ENCODE measurements at regions of chr13 and their contacts with region 1.

Region 1: GRCh38 chr13:19863323-19864023 is at the start of gene ZMYM5:
- DNase-seq: peak; percentile 98
- ATAC-seq: peak; percentile 86
- H3K4me3 ChIP-seq: peak within 1 kb of the TSS; percentile 80 to 92 (median 81)
- H3K27ac ChIP-seq: peak within 1 kb of the TSS; percentile 89 to 98 (median 92)
- H3K4me1 ChIP-seq: peaks cover 16 to 17% of the 10 kb centered on the region in 2 donors
- H3K27me3 ChIP-seq: no peaks in the 10 kb centered on the region
- CTCF ChIP-seq: no peak
- POLR2A ChIP-seq: peak; percentile 90 to 97
- total RNA-seq, gene ZMYM5: 7.8 to 13.8 (median 10.2) TPM

Region 2: DNA sequence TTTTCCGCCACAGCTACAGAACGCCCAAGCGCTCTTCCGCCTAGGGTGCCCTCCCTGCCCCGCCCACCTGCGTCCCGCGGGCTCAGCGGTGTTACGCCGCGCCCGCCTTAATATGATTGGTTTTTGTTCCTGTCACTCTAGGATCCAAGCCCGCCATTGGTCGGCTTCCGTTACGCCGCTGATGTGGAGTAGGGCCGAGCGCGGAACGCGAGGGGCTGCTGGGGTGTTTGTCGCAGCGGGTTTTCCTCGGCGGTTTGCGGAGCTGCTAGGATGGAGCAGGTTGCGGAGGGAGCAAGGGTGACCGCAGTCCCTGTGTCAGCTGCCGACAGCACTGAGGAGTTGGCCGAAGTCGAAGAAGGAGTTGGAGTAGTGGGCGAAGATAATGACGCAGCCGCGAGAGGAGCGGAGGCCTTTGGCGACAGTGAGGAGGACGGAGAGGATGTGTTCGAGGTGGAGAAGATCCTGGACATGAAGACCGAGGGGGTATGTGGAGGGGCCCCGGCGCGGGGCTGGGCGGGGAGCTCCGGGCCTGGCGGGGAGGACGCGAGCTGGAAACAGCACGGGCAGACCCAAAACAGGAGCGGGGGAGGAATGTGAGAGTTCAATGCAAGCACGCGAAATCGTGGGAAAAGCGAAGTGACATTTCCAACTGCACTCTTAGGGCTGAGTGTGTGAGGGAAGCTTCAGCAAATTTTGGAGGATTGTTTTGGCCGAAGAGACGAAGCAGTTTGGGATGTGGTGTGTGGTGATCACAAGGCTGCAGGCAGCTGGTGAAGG is 229.8 kb before region 1 on chr13 and contains the start of gene MPHOSPH8:
- in situ Hi-C with region 1: loop called in 2 of 4 experiments (anchors 10 kb)
- intact Hi-C with region 1: loop called (anchors 2 kb)
- DNase-seq: peak; percentile 93 to 94
- ATAC-seq: peak; percentile 98 to 99
- H3K4me3 ChIP-seq: peak within 1 kb of the TSS; percentile 63 to 93 (median 88)
- H3K27ac ChIP-seq: peak within 1 kb of the TSS; percentile 87 to 97 (median 93)
- H3K4me1 ChIP-seq: peaks cover 19 to 22% of the 10 kb centered on the region in 2 donors
- H3K27me3 ChIP-seq: no peaks in the 10 kb centered on the region
- CTCF ChIP-seq: no peak
- POLR2A ChIP-seq: peak; percentile 86 to 87
- total RNA-seq, gene MPHOSPH8: 8.0 to 15.5 (median 13.4) TPM

Region 3: GRCh38 chr13:19713186-19713965 is 150.1 kb before region 1 on chr13:
- in situ Hi-C with region 1: no loop called
- intact Hi-C with region 1: no loop called
- DNase-seq: no peak
- ATAC-seq: no peak
- H3K4me3 ChIP-seq: no peak overlapping the region
- H3K27ac ChIP-seq: no peak overlapping the region
- H3K4me1 ChIP-seq: no peaks in the 10 kb centered on the region
- H3K27me3 ChIP-seq: no peaks in the 10 kb centered on the region
- CTCF ChIP-seq: no peak
- POLR2A ChIP-seq: no peak

Region 4: GRCh38 chr13:19759671-19760070 is 103.8 kb before region 1 on chr13:
- in situ Hi-C with region 1: no loop called
- intact Hi-C with region 1: no loop called
- DNase-seq: no peak
- ATAC-seq: no peak
- H3K4me3 ChIP-seq: no peak overlapping the region
- H3K27ac ChIP-seq: no peak overlapping the region
- H3K4me1 ChIP-seq: peaks cover 12 to 15% of the 10 kb centered on the region in 2 donors
- H3K27me3 ChIP-seq: no peaks in the 10 kb centered on the region
- CTCF ChIP-seq: no peak
- POLR2A ChIP-seq: no peak

Region 5: GRCh38 chr13:19772306-19772705 is 91.2 kb before region 1 on chr13:
- in situ Hi-C with region 1: loop called in 1 of 4 experiments (anchors 10 kb)
- intact Hi-C with region 1: no loop called
- DNase-seq: no peak
- ATAC-seq: no peak
- H3K4me3 ChIP-seq: no peak overlapping the region
- H3K27ac ChIP-seq: no peak overlapping the region
- H3K4me1 ChIP-seq: peaks cover 5 to 8% of the 10 kb centered on the region in 2 donors
- H3K27me3 ChIP-seq: no peaks in the 10 kb centered on the region
- CTCF ChIP-seq: no peak
- POLR2A ChIP-seq: no peak

Region 6: GRCh38 chr13:19782049-19782726 is 81.3 kb before region 1 on chr13:
- in situ Hi-C with region 1: loop called in 1 of 4 experiments (anchors 10 kb)
- intact Hi-C with region 1: loop called (anchors 1 kb)
- DNase-seq: peak; percentile 15 to 47
- ATAC-seq: peak; percentile 73 to 81
- H3K4me3 ChIP-seq: peak overlapping the region; percentile 81 to 99 (median 92)
- H3K27ac ChIP-seq: peak overlapping the region; percentile 89 to 98 (median 94)
- H3K4me1 ChIP-seq: peaks cover 3 to 9% of the 10 kb centered on the region in 2 donors
- H3K27me3 ChIP-seq: no peaks in the 10 kb centered on the region
- CTCF ChIP-seq: no peak
- POLR2A ChIP-seq: no peak

Region 7: DNA sequence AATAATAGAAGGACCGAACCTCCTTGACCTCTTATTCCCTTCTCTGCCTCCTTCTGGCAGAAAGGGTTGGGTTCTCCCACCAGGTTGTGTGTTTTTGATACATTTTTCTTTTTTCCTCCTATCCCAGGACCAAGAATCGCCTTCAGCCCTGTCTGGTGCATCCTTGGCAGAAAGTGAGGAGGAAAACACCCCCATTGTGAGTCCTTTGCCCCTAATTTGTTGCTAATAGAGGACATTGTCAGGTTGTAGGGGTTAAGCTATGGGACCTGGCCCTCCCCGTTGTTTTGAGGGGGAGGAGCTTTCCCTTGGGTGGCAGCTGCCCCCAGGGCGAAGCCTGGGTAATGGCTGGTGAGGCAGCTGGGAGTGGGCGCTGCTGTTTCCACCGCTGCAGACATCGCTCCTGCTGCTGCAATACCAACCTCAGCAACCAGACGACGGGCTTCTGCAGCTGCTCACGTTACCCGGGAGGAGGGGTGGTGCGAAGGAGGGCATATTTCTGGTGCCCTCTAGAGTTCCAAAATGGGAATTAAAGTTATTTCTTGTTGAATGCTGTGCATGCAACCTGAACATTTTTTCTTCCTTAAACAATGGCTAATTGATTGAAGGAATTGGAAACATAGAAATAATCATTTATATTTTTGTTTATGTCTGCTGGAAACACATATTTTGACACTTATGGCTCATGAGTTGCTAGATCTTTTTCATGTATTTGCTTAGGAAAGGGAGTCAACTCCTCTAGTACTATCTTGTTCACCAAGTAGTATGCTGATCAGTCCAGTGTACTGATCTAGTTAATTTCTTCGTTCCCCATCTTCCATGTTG is 96.6 kb after region 1 on chr13:
- in situ Hi-C with region 1: loop called in 2 of 4 experiments (anchors 10 to 25 kb)
- intact Hi-C with region 1: loop called (anchors 1 kb)
- DNase-seq: peak; percentile 80 to 89
- ATAC-seq: peak; percentile 64 to 70
- H3K4me3 ChIP-seq: peak overlapping the region; percentile 74 to 97 (median 86)
- H3K27ac ChIP-seq: peak overlapping the region; percentile 96 to 98 (median 97)
- H3K4me1 ChIP-seq: peaks cover 19 to 39% of the 10 kb centered on the region in 2 donors
- H3K27me3 ChIP-seq: no peaks in the 10 kb centered on the region
- CTCF ChIP-seq: peak; percentile 78 to 99 (median 85)
- POLR2A ChIP-seq: peak; percentile 42 to 60

Region 8: GRCh38 chr13:20332361-20333096 is 469.1 kb after region 1 on chr13:
- in situ Hi-C with region 1: no loop called
- intact Hi-C with region 1: no loop called
- DNase-seq: no peak
- ATAC-seq: peak; percentile 51 to 65
- H3K4me3 ChIP-seq: no peak overlapping the region
- H3K27ac ChIP-seq: no peak overlapping the region
- H3K4me1 ChIP-seq: no peaks in the 10 kb centered on the region
- H3K27me3 ChIP-seq: no peaks in the 10 kb centered on the region
- CTCF ChIP-seq: no peak
- POLR2A ChIP-seq: no peak